T-cell (primary cell): ENCODE measurements at regions of chr9 and their contacts with region 1.

Region 1: GRCh38 chr9:89602978-89603766 is 1.6 kb upstream of the GADD45G start:
- DNase-seq: peak; percentile 68 to 92 (median 80)
- ATAC-seq: peak; percentile 31 to 38 (median 34)
- H3K4me3 ChIP-seq: peak overlapping the region; percentile 55 to 73
- H3K4me3 Mint-ChIP-seq: peak overlapping the region; percentile 81 to 84 (median 84)
- H3K27ac ChIP-seq: no peak overlapping the region
- H3K27ac Mint-ChIP-seq: peak overlapping the region in 1 of 2 donors; percentile 29
- H3K4me1 ChIP-seq: peaks cover 6 to 39% of the 10 kb centered on the region in 2 experiments
- H3K4me1 Mint-ChIP-seq: peaks cover 23 to 26% (median 26%) of the 10 kb centered on the region in 3 donors
- H3K27me3 ChIP-seq: peaks cover 0 to 52% of the 10 kb centered on the region in 2 experiments
- H3K27me3 Mint-ChIP-seq: peaks cover 0 to 5% of the 10 kb centered on the region in 2 donors

Region 2: DNA sequence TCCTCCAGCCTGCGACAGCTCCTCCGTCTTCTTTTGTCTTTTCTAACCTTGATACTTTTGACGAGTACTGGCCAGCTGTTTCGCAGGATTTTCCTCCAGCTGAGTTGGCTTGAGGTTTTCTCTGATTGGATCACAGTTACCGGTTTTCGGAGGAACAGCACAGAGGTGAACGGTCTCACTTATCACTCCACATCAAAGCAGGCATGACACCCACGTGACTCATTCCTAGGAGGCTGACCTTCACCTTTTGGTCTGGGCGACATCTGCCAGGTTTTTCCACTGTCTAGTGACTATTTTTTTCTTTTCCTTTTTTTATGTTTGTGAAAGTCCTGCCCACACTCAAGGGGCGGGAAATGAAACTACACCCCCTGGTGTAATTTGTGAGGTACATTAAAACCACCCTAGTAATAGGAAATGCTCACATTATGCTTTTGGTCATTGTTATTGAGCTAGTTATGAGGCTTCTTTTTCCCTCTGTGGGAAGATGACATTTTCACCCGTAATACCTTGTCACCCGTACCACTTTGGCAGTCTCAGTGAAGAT is 320.9 kb after region 1 on chr9:
- CTCF ChIA-PET with region 1: interaction called, 4 to 13 read pairs
- POLR2A ChIA-PET with region 1: no interaction called
- DNase-seq: peak in 1 of 35 experiments; percentile 42
- ATAC-seq: peak in 1 of 4 experiments; percentile 55
- H3K4me3 ChIP-seq: no peak overlapping the region
- H3K4me3 Mint-ChIP-seq: no peak overlapping the region
- H3K27ac ChIP-seq: no peak overlapping the region
- H3K27ac Mint-ChIP-seq: no peak overlapping the region
- H3K4me1 ChIP-seq: peaks cover 0 to 10% of the 10 kb centered on the region in 2 experiments
- H3K4me1 Mint-ChIP-seq: peaks cover 6 to 13% (median 9%) of the 10 kb centered on the region in 3 donors
- H3K27me3 ChIP-seq: peaks cover 0 to 34% of the 10 kb centered on the region in 2 experiments
- H3K27me3 Mint-ChIP-seq: peaks cover 7 to 15% of the 10 kb centered on the region in 2 donors

Region 3: GRCh38 chr9:90102292-90102901 is 499.2 kb after region 1 on chr9:
- CTCF ChIA-PET with region 1: interaction called, 13 to 72 read pairs
- POLR2A ChIA-PET with region 1: no interaction called
- DNase-seq: peak; percentile 38 to 87 (median 73)
- ATAC-seq: peak; percentile 97 to 100 (median 98)
- H3K4me3 ChIP-seq: no peak overlapping the region
- H3K4me3 Mint-ChIP-seq: no peak overlapping the region
- H3K27ac ChIP-seq: no peak overlapping the region
- H3K27ac Mint-ChIP-seq: no peak overlapping the region
- H3K4me1 ChIP-seq: peaks cover 5 to 7% of the 10 kb centered on the region in 2 experiments
- H3K4me1 Mint-ChIP-seq: peaks cover 0 to 6% (median 6%) of the 10 kb centered on the region in 3 donors
- H3K27me3 ChIP-seq: peaks cover 0 to 12% of the 10 kb centered on the region in 2 experiments
- H3K27me3 Mint-ChIP-seq: peaks cover 0 to 2% of the 10 kb centered on the region in 2 donors